Caco-2 (cell line): ENCODE measurements at regions of chr4 and their contacts with region 1.

Region 1: DNA sequence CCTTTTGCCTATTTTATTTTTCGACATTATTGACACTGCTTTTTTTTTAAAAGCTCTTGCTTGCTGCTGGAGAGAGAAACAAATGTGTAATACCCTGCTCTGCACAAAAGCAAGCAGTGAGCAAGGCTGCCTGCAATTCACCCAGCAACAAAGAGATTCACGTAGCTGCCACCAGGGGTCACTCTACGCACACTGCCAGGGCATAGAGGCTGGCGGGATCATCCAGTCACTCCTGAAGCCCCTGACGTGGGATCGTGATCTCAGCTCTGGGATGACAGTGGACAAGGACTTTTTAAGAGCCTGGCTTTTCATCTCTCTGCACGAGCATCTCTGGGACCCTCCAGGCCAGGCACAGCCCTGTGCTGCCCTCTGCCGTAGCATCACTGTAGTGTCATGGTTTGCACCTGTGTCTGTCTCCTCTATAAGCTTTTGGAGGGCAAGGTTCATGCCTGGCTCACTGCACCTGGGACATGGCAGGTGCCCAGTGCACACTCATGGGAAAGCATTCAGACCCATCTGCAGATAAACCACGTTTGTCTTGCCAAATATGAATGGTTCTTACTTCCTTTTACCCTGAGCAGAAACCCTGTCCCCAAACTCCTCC is 19.8 kb downstream of the C4orf50 start:
- DNase-seq: peak; percentile 63 to 65
- H3K4me3 ChIP-seq: no peak overlapping the region
- H3K4me3 Mint-ChIP-seq: no peak overlapping the region
- H3K27ac Mint-ChIP-seq: no peak overlapping the region
- H3K4me1 ChIP-seq: no peaks in the 10 kb centered on the region
- H3K4me1 Mint-ChIP-seq: no peaks in the 10 kb centered on the region
- H3K27me3 ChIP-seq: no peaks in the 10 kb centered on the region
- H3K27me3 Mint-ChIP-seq: peaks cover 7% of the 10 kb centered on the region
- CTCF ChIP-seq: peak; percentile 80 to 90

Region 2: GRCh38 chr4:5730993-5731990 is 267.1 kb before region 1 on chr4:
- CTCF ChIA-PET with region 1: no interaction called
- POLR2A ChIA-PET with region 1: no interaction called
- intact Hi-C with region 1: no loop called
- DNase-seq: no peak
- H3K4me3 ChIP-seq: no peak overlapping the region
- H3K4me3 Mint-ChIP-seq: no peak overlapping the region
- H3K27ac Mint-ChIP-seq: no peak overlapping the region
- H3K4me1 ChIP-seq: no peaks in the 10 kb centered on the region
- H3K4me1 Mint-ChIP-seq: no peaks in the 10 kb centered on the region
- H3K27me3 ChIP-seq: no peaks in the 10 kb centered on the region
- H3K27me3 Mint-ChIP-seq: peaks cover 4% of the 10 kb centered on the region
- CTCF ChIP-seq: no peak

Region 3: GRCh38 chr4:6087673-6088341 is 89.4 kb after region 1 on chr4:
- CTCF ChIA-PET with region 1: interaction called, 10 read pairs
- POLR2A ChIA-PET with region 1: no interaction called
- intact Hi-C with region 1: no loop called
- DNase-seq: peak; percentile 45 to 46
- H3K4me3 ChIP-seq: no peak overlapping the region
- H3K4me3 Mint-ChIP-seq: no peak overlapping the region
- H3K27ac Mint-ChIP-seq: no peak overlapping the region
- H3K4me1 ChIP-seq: no peaks in the 10 kb centered on the region
- H3K4me1 Mint-ChIP-seq: no peaks in the 10 kb centered on the region
- H3K27me3 ChIP-seq: no peaks in the 10 kb centered on the region; the same call in 1 of the 2 replicates
- H3K27me3 Mint-ChIP-seq: peaks cover 11% of the 10 kb centered on the region
- CTCF ChIP-seq: peak; percentile 24 to 58

Region 4: DNA sequence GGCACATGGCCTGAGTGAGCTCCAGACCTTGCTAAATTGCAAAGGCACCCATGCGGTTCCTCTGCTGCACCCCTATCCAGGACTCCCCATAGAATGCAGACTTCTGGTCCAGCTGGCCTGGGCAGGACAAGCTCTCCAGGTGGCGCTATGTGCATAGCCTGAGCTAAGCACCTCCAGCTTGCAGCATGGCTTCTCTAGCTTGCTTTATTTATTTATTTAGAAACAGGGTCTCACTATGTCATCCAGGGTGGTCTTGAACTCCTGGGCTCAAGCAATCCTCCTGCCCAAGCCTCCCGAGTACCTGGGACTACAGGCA is 265.7 kb after region 1 on chr4:
- CTCF ChIA-PET with region 1: no interaction called
- POLR2A ChIA-PET with region 1: no interaction called
- intact Hi-C with region 1: no loop called
- DNase-seq: peak; percentile 59
- H3K4me3 ChIP-seq: no peak overlapping the region
- H3K4me3 Mint-ChIP-seq: no peak overlapping the region
- H3K27ac Mint-ChIP-seq: no peak overlapping the region
- H3K4me1 ChIP-seq: 0 out of 2 replicates have a peak, but pooled peaks cover 6% of the 10 kb centered on the region
- H3K4me1 Mint-ChIP-seq: no peaks in the 10 kb centered on the region
- H3K27me3 ChIP-seq: no peaks in the 10 kb centered on the region
- H3K27me3 Mint-ChIP-seq: peaks cover 8% of the 10 kb centered on the region
- CTCF ChIP-seq: peak; percentile 28 to 73